Natural killer cell (primary cell): ENCODE measurements at regions of chrX and their contacts with region 1.

Region 1: DNA sequence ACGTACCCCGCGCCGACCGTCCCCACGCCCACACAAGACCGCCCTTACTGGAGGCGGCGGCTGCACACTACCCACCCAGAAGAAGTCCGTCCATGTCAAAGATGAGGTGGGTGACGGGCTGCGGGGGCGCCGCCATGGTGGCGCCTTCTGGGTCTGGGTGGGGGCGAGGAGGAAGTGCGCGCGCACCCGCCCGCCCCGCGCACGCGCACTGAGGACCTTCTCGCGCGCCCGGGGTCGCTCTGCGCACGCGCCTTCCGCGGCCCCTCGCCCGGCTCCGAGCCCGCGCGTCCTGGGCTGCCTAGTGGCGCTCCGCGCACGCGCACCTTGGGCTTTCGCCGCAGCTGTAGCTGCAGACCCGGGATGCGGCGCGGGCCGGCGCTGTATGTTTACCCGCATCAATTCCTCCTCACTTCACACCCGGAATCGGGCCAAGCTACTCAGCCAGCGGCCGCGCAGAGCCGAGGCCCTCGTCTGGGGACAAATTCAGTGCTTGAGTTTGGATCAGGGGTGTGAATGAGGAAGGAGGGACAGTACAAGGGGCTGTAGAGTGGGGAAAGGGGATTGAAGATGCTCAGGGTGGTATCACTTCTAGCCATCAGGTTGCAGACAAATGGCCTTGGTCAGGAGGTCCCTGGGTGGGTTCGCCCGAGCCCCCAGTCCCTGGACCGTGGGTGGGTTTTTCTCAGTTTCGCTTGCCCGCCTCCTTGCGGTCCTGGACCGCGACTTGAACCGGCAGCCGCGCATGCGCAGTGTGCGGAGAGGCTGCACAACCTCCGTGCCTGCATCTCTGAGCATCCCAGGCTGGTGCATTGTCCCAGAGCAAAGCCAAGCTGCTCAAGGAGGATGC is at the start of gene PUDP:
- DNase-seq: peak; percentile 82 to 94
- ATAC-seq: peak; percentile 84 to 95 (median 87)
- H3K4me3 ChIP-seq: peak within 1 kb of the TSS; percentile 99
- H3K4me3 Mint-ChIP-seq: peak within 1 kb of the TSS; percentile 92
- H3K27ac ChIP-seq: peak within 1 kb of the TSS; percentile 83
- H3K27ac Mint-ChIP-seq: peak within 1 kb of the TSS; percentile 81 to 92
- H3K4me1 ChIP-seq: peaks cover 9% of the 10 kb centered on the region
- H3K4me1 Mint-ChIP-seq: peaks cover 7 to 17% of the 10 kb centered on the region in 2 donors
- H3K27me3 ChIP-seq: no peaks in the 10 kb centered on the region
- H3K27me3 Mint-ChIP-seq: no peaks in the 10 kb centered on the region
- CTCF ChIP-seq: no peak
- total RNA-seq, gene PUDP: 5.4 to 11.4 (median 5.6) TPM

Region 2: GRCh38 chrX:7170903-7171302 is 22.7 kb after region 1 on chrX:
- intact Hi-C with region 1: no loop called
- DNase-seq: peak; percentile 15 to 48
- ATAC-seq: peak in 2 of 3 donors; percentile 57 to 68
- H3K4me3 ChIP-seq: no peak overlapping the region
- H3K4me3 Mint-ChIP-seq: no peak overlapping the region
- H3K27ac ChIP-seq: no peak overlapping the region
- H3K27ac Mint-ChIP-seq: no peak overlapping the region
- H3K4me1 ChIP-seq: no peaks in the 10 kb centered on the region
- H3K4me1 Mint-ChIP-seq: no peaks in the 10 kb centered on the region
- H3K27me3 ChIP-seq: no peaks in the 10 kb centered on the region
- H3K27me3 Mint-ChIP-seq: no peaks in the 10 kb centered on the region
- CTCF ChIP-seq: peak; percentile 31

Region 3: GRCh38 chrX:7205037-7205577 is 56.9 kb after region 1 on chrX:
- intact Hi-C with region 1: no loop called
- DNase-seq: no peak
- ATAC-seq: no peak
- H3K4me3 ChIP-seq: no peak overlapping the region
- H3K4me3 Mint-ChIP-seq: no peak overlapping the region
- H3K27ac ChIP-seq: no peak overlapping the region
- H3K27ac Mint-ChIP-seq: no peak overlapping the region
- H3K4me1 ChIP-seq: no peaks in the 10 kb centered on the region
- H3K4me1 Mint-ChIP-seq: no peaks in the 10 kb centered on the region
- H3K27me3 ChIP-seq: no peaks in the 10 kb centered on the region
- H3K27me3 Mint-ChIP-seq: no peaks in the 10 kb centered on the region
- CTCF ChIP-seq: no peak

Region 4: DNA sequence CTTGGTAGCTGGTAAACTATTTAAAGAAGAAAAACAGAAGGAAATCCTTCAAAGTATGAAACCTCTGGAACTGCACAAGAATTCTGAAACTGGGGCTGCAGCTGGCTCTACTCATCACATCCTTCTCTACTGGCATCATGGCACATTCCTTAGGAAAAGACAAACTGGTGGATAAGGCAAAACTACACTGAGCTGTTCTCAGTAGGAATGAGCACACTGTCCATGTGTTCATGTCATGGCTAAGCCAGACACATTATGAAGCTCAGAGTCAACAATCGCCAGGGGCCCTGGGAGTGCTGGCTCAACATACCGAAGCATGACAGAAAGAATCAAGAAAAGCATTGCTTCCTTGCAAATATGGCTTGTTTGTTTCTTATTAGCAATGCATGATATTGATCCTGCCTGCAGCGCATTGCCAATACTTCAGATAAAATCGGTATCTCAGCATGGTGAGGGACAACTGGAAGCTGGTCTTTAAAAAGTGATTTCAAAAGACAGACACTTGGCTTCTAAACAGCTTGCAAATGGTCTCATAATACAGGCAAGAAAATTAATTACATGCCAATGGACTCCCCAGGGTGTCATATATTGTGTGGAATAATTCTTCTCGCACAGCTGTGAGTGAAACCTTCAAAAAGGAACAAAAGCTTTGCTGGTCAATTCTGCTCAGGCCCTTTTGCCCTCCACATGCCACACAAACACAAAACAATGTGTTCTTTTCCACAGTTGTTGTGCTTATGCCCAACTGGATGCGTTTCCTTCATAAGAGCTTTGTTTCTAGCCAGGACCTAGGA is 394.6 kb after region 1 on chrX:
- intact Hi-C with region 1: no loop called
- DNase-seq: no peak
- ATAC-seq: no peak
- H3K4me3 ChIP-seq: no peak overlapping the region
- H3K4me3 Mint-ChIP-seq: no peak overlapping the region
- H3K27ac ChIP-seq: no peak overlapping the region
- H3K27ac Mint-ChIP-seq: no peak overlapping the region
- H3K4me1 ChIP-seq: no peaks in the 10 kb centered on the region
- H3K4me1 Mint-ChIP-seq: no peaks in the 10 kb centered on the region
- H3K27me3 ChIP-seq: no peaks in the 10 kb centered on the region
- H3K27me3 Mint-ChIP-seq: no peaks in the 10 kb centered on the region
- CTCF ChIP-seq: no peak

Region 5: GRCh38 chrX:7925867-7926472 is 777.8 kb after region 1 on chrX:
- intact Hi-C with region 1: loop called (anchors 10 kb)
- DNase-seq: peak; percentile 34 to 78
- ATAC-seq: peak in 2 of 3 donors; percentile 33 to 42
- H3K4me3 ChIP-seq: no peak overlapping the region
- H3K4me3 Mint-ChIP-seq: peak overlapping the region; percentile 95
- H3K27ac ChIP-seq: no peak overlapping the region
- H3K27ac Mint-ChIP-seq: peak overlapping the region; percentile 91 to 95
- H3K4me1 ChIP-seq: peaks cover 14% of the 10 kb centered on the region
- H3K4me1 Mint-ChIP-seq: peaks cover 0 to 28% of the 10 kb centered on the region in 2 donors
- H3K27me3 ChIP-seq: no peaks in the 10 kb centered on the region
- H3K27me3 Mint-ChIP-seq: peaks cover 0 to 4% of the 10 kb centered on the region in 2 donors
- CTCF ChIP-seq: peak; percentile 56